Head of caudate nucleus (tissue), 42 donors: ENCODE measurements at regions of chr13 and their contacts with region 1.

Region 1: GRCh38 chr13:102141625-102142472 is 260.0 kb downstream of the FGF14 start:
- DNase-seq: no peak

Region 2: GRCh38 chr13:102212729-102213128 is 70.9 kb after region 1 on chr13:
- intact Hi-C with region 1: no loop called
- DNase-seq: peak in 1 of 42 donors; percentile 12

Region 3: GRCh38 chr13:102402290-102402689 is 260.4 kb after region 1 on chr13:
- intact Hi-C with region 1: loop called (anchors 5 kb)
- DNase-seq: peak; percentile 41 to 89 (median 68)